ENCODE measurements at regions of chr5 and their contacts with region 1.

Region 1: DNA sequence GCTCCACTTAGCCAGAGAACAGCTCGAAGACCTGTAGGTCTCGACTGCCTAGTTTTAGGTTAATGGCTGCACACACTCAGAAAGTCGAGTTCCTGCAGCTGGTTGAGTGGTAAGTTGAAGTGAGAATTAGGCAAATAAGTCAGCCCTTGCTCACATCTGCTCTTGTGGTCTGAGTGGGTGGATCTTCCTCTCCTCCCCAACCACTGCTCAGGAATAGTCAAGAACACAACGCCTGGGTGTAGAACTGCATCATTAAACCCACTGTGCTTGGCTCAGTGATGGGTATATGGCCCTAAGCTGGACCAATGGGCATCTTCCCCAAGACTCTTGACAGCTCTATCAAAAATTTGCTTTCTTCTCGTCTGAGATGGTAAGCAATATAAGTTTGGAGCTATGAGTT is 20.9 kb upstream of the ADAM19 start:
- DNase-seq: peak; percentile 49
- H3K4me3 Mint-ChIP-seq: no peak overlapping the region
- H3K27ac Mint-ChIP-seq: peak overlapping the region; percentile 21
- H3K4me1 Mint-ChIP-seq: peaks cover 90% of the 10 kb centered on the region
- H3K27me3 Mint-ChIP-seq: no peaks in the 10 kb centered on the region

Region 2: GRCh38 chr5:157253547-157253946 is 342.9 kb before region 1 on chr5:
- intact Hi-C with region 1: no loop called
- DNase-seq: no peak
- H3K4me3 Mint-ChIP-seq: peak overlapping the region; percentile 58
- H3K27ac Mint-ChIP-seq: peak overlapping the region; percentile 95
- H3K4me1 Mint-ChIP-seq: peaks cover 87% of the 10 kb centered on the region
- H3K27me3 Mint-ChIP-seq: no peaks in the 10 kb centered on the region

Region 3: GRCh38 chr5:157471709-157472108 is 124.8 kb before region 1 on chr5:
- intact Hi-C with region 1: no loop called
- DNase-seq: no peak
- H3K4me3 Mint-ChIP-seq: no peak overlapping the region
- H3K27ac Mint-ChIP-seq: no peak overlapping the region
- H3K4me1 Mint-ChIP-seq: peaks cover 18% of the 10 kb centered on the region
- H3K27me3 Mint-ChIP-seq: no peaks in the 10 kb centered on the region

Region 4: DNA sequence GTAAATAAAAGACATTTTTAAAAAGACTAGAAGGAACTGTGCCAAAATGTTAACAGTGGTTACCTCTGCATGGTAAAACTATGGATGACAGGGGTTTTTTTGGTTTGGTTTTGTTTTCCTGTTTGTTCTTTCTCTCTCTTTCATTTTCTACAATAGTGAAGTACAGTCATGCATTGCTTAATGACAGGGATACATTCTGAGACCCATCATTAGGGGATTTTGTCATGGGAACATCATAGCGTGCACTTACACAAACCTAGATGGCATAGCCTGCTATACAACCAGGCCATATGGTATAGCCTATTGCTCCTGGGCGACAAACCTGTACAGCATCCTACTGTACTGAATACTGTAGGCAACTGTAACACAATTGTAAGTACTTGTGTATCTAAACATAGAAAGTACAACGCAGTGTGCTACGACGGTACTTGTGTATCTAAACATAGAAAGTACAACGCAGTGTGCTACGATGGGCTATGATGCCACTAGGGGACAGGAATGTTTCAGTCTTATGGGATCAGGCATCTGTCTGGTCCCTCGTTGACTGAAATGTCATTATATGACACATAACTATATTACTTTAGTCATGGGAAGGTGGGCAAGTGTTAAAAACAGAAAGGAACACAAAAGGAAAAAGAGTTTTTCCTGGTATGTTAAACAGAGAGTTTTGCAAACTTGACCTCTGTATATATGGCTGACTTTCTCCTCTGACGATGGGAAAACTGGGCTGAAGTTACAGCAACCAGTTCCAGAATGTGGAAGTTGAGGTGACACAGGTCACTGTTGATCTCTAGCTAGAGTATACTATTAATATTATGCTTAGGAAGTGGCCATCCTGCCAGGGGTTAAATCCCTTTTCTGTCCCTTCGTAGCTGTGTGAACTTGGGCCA is 13.5 kb before region 1 on chr5:
- intact Hi-C with region 1: loop called (anchors 1 kb)
- DNase-seq: no peak
- H3K4me3 Mint-ChIP-seq: peak overlapping the region; percentile 1
- H3K27ac Mint-ChIP-seq: peak overlapping the region; percentile 65
- H3K4me1 Mint-ChIP-seq: peaks cover 52% of the 10 kb centered on the region
- H3K27me3 Mint-ChIP-seq: no peaks in the 10 kb centered on the region

Region 5: DNA sequence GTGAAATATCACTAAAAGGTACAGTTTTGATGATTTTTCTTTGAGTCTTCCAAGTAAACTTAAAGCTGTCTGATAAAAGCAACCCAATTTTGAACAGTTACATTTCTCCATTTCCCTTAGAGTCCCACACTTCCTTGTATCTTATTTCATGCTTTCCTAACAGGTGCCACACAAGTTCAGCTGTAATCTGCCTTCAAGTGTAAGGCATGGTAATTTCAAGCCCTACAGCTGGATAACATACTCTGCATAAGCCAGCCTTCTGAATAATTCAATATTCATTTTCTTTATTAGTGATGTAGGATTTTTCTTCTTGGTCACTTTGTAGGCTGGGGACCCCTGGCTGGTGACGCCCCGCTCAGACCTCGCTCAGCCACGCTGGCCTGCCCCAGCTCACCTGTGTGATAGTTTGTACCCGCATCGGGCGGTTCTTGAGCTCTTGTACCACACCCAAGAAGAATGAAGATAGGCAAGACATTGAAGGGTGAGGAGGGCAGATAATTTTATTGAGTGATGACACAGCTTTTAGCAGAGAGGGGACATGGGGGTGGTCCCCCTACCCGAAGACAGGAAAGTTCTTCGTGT is 21.8 kb after region 1 on chr5:
- intact Hi-C with region 1: no loop called
- DNase-seq: no peak
- H3K4me3 Mint-ChIP-seq: no peak overlapping the region
- H3K27ac Mint-ChIP-seq: no peak overlapping the region
- H3K4me1 Mint-ChIP-seq: peaks cover 11% of the 10 kb centered on the region
- H3K27me3 Mint-ChIP-seq: no peaks in the 10 kb centered on the region

Region 6: GRCh38 chr5:157731272-157732129 is 135.0 kb after region 1 on chr5 and contains the start of gene THG1L:
- intact Hi-C with region 1: no loop called
- DNase-seq: peak; percentile 97
- H3K4me3 Mint-ChIP-seq: peak within 1 kb of the TSS; percentile 90
- H3K27ac Mint-ChIP-seq: peak within 1 kb of the TSS; percentile 95
- H3K4me1 Mint-ChIP-seq: peaks cover 26% of the 10 kb centered on the region
- H3K27me3 Mint-ChIP-seq: no peaks in the 10 kb centered on the region
- total RNA-seq, gene THG1L: 28.8 and 29.3 TPM in 2 replicates

Measured in activated T-helper 2 cell treated with anti-CD3 and anti-CD28 coated beads, Interferon-gamma antibody, Interleukin-2, Interleukin-4, amounts not matched to agents 10 μg/mL and 5 μg/mL and 100 μg/mL, durations not matched to agents 14 hours and 24 hours and 36 hours (primary cell).